WTC11 (cell line): ENCODE measurements at regions of chr15 and their contacts with region 1.

Region 1: DNA sequence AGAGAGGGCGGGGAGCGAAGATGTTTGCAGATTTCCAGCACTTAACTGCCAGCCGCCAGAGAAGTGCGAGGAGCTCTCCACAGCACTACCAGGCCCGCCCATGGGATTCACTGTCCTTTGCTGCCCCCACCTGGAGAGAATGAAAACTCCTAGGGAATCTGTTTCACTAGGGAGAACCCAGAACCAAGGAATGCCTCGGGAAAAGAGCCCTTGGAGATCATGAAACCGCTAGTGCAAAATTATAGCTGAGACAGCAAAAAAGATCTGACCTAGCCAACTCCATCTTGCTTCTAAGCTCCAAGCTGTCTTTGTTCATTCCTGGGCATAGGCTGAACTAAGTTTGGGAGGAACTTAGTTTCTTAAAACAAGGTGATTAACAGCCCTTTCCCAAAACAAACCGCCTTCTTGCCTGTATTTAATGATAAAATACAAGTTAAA is 82.6 kb upstream of the GCNT3 start:
- DNase-seq: peak; percentile 93
- ATAC-seq: peak; percentile 96
- H3K4me3 Mint-ChIP-seq: no peak overlapping the region
- H3K27ac Mint-ChIP-seq: no peak overlapping the region
- H3K4me1 Mint-ChIP-seq: peaks cover 12% of the 10 kb centered on the region
- H3K27me3 Mint-ChIP-seq: no peaks in the 10 kb centered on the region; the same call in 1 of the 2 replicates
- CTCF ChIP-seq: peak; percentile 74

Region 2: GRCh38 chr15:59165726-59166125 is 363.3 kb before region 1 on chr15:
- CTCF ChIA-PET with region 1: interaction called, 20 read pairs
- POLR2A ChIA-PET with region 1: no interaction called
- DNase-seq: no peak
- ATAC-seq: no peak
- H3K4me3 Mint-ChIP-seq: no peak overlapping the region
- H3K27ac Mint-ChIP-seq: peak overlapping the region; percentile 63
- H3K4me1 Mint-ChIP-seq: peaks cover 22% of the 10 kb centered on the region
- H3K27me3 Mint-ChIP-seq: no peaks in the 10 kb centered on the region
- CTCF ChIP-seq: no peak

Region 3: GRCh38 chr15:59247364-59247763 is 281.6 kb before region 1 on chr15:
- CTCF ChIA-PET with region 1: interaction called, 17 read pairs
- POLR2A ChIA-PET with region 1: no interaction called
- DNase-seq: peak; percentile 67
- ATAC-seq: peak; percentile 95
- H3K4me3 Mint-ChIP-seq: no peak overlapping the region
- H3K27ac Mint-ChIP-seq: peak overlapping the region; percentile 23; the same call in 1 of the 2 replicates
- H3K4me1 Mint-ChIP-seq: peaks cover 3% of the 10 kb centered on the region
- H3K27me3 Mint-ChIP-seq: no peaks in the 10 kb centered on the region
- CTCF ChIP-seq: peak; percentile 45

Region 4: DNA sequence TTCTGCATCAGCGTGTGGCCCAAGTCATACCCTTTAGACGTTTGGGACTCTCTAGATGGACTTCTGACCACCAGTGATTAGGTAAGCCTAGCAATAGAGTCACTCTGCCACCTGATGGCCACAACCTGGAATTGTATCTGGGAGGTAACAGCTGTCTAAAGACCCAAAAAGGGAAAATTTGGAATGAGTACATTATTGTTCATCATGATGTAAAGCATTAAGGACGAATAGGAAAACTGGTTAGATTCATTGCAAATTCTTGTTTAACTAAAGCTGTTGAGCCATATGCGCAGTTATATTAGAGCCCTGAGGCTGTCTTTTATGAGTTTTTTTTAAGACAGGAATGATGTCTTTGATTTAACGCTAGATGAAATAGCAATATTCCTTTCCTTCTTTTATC is 27.4 kb before region 1 on chr15:
- CTCF ChIA-PET with region 1: interaction called, 48 read pairs
- POLR2A ChIA-PET with region 1: no interaction called
- DNase-seq: peak; percentile 72
- ATAC-seq: peak; percentile 76
- H3K4me3 Mint-ChIP-seq: no peak overlapping the region
- H3K27ac Mint-ChIP-seq: no peak overlapping the region
- H3K4me1 Mint-ChIP-seq: no peaks in the 10 kb centered on the region
- H3K27me3 Mint-ChIP-seq: no peaks in the 10 kb centered on the region
- CTCF ChIP-seq: peak; percentile 62

Region 5: GRCh38 chr15:59543721-59544547 is 14.9 kb after region 1 on chr15:
- CTCF ChIA-PET with region 1: interaction called, 20 read pairs
- POLR2A ChIA-PET with region 1: no interaction called
- DNase-seq: no peak
- ATAC-seq: no peak
- H3K4me3 Mint-ChIP-seq: no peak overlapping the region
- H3K27ac Mint-ChIP-seq: no peak overlapping the region
- H3K4me1 Mint-ChIP-seq: peaks cover 4% of the 10 kb centered on the region; the same call in 1 of the 2 replicates
- H3K27me3 Mint-ChIP-seq: peaks cover 79% of the 10 kb centered on the region
- CTCF ChIP-seq: no peak

Region 6: GRCh38 chr15:59611276-59612260 is 82.6 kb after region 1 on chr15 and contains the start of gene GCNT3:
- CTCF ChIA-PET with region 1: interaction called, 15 read pairs
- POLR2A ChIA-PET with region 1: no interaction called
- DNase-seq: no peak
- ATAC-seq: no peak
- H3K4me3 Mint-ChIP-seq: no peak within 1 kb of the TSS
- H3K27ac Mint-ChIP-seq: no peak within 1 kb of the TSS
- H3K4me1 Mint-ChIP-seq: peaks cover 10% of the 10 kb centered on the region
- H3K27me3 Mint-ChIP-seq: peaks cover 14% of the 10 kb centered on the region
- CTCF ChIP-seq: no peak
- total RNA-seq, gene GCNT3: 0.07 to 0.20 TPM (median 0.11 TPM) in 3 replicates

Region 7: GRCh38 chr15:59632714-59633113 is 103.7 kb after region 1 on chr15:
- CTCF ChIA-PET with region 1: interaction called, 169 read pairs
- POLR2A ChIA-PET with region 1: no interaction called
- DNase-seq: peak; percentile 64
- ATAC-seq: peak; percentile 100
- H3K4me3 Mint-ChIP-seq: no peak overlapping the region
- H3K27ac Mint-ChIP-seq: no peak overlapping the region
- H3K4me1 Mint-ChIP-seq: peaks cover 3% of the 10 kb centered on the region
- H3K27me3 Mint-ChIP-seq: no peaks in the 10 kb centered on the region
- CTCF ChIP-seq: no peak